ENCODE measurements at regions of chr1 and their contacts with region 1.

Region 1: DNA sequence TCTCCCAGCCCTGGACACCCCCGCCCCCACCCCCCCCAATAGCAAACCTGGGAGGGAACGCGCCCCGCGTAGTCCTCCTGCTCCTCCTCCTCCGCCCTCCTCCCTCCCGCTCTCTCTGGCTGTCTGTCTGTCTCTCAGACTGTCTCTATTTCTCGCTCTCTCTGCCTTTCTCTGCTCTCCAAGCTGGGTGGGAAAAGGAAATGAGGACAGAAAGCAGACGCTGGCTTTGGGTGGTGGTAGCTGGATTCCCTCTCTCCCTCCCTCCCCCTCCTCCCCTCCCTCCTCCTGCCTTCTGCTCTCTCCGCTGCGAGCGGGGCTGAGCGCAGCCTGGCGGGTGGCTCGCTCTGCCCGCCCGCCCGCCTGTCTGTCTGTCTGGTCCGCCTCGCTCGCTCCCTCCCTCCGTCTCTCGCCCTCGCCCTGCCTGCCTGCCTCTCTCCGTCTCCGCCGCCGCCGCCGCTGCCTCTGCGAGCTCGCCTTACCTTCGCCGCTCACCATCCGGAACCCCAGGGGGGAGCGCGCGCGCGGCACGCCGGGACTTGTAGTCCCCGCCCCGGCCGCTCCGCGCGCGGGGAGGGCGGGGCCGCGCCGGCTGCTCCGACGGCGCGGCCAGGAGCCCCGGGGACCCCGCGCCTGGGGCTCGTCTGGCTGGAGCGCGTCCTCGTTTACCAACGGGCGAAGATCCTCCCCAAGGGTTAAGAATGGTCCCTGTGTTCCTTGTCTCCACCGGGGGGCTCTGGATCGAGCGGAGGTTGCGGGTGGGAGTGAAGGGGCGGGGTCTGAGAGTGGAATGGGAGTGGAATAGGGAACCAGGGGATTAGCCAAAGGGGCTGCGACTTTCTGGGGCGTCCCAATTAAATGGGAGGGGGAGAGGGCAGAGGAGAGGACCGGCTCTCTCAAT is at the start of gene AHDC1:
- DNase-seq: peak; percentile 93
- CTCF ChIP-seq: no peak

Region 2: DNA sequence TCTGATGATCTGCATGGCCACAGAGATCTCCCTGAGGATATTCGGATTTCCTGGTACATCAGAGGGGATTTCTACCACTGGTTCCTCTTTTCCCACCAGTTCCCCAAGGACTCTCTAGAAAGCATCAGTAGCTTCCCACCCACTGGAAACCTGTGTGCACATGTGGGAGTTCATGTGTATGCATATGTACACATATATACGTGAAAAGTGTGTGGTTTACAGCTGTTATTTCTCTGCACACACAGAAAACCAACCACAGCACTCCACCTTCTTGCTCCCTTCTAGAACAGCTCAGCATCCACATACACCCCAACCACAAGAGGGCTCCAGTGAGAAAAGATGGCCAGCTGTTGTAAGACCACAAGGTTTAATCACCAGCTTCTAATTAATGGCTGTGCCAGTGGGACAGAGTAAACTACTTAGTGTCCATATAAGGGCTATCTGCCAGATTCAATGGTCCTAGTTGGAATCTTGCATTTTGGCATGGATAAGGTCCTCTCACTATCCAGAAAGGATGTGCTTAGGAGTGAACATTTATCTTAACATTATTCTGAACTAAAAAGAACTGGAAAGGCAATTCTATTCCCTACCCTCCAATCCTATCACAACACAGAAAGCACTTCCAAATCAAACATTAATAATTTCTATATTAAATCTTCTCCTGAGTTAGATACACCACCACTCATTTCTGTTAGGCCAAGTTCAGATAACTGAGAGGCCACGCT is 187.4 kb before region 1 on chr1:
- CTCF ChIA-PET with region 1: interaction called, 41 read pairs
- POLR2A ChIA-PET with region 1: no interaction called
- DNase-seq: no peak
- CTCF ChIP-seq: peak; percentile 64

Region 3: GRCh38 chr1:27536767-27537166 is 67.2 kb before region 1 on chr1:
- CTCF ChIA-PET with region 1: no interaction called
- POLR2A ChIA-PET with region 1: no interaction called
- DNase-seq: no peak
- CTCF ChIP-seq: no peak

Region 4: GRCh38 chr1:27568300-27569087 is 35.4 kb before region 1 on chr1:
- CTCF ChIA-PET with region 1: interaction called, 16 read pairs
- POLR2A ChIA-PET with region 1: interaction called, 3 read pairs
- DNase-seq: peak; percentile 98
- CTCF ChIP-seq: peak; percentile 64

Region 5: DNA sequence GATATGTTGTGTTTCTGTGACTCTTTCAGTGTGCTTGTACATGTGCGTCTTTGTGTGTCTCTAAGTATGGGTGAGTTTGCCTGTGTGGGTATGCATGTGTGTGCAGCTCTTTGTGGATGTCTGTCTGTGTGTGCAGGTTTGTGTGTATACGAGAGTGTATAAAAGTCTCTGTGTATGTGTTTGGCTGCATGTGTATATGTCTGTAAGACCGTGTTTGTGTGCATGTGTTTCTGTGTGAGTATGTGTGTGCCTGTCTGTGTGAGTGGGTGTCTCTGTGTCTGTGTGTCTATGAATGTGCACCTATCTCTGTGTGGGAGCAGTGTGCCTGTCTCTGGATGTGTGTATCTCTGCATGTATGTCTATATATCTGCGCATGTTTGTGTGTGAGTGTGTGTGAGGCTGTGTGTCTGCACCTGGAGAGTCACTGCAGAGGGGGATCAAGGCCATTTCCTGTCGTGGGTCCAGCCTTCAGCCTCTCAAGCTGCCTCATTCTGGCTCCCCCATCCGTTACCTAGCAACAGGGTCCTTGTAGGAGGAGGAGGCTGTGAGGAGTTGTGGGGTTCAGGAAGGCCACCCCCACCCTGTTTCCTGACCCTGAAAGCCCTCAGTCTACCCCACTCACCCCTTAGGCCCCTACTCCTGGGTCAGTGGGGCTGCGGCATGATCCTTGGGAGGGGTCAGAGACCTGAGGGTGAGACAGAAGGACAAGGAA is 20.7 kb after region 1 on chr1:
- CTCF ChIA-PET with region 1: interaction called, 25 read pairs
- POLR2A ChIA-PET with region 1: no interaction called
- DNase-seq: peak; percentile 59
- CTCF ChIP-seq: no peak

Region 6: GRCh38 chr1:27643701-27644625 is 40.0 kb after region 1 on chr1:
- CTCF ChIA-PET with region 1: interaction called, 12 read pairs
- POLR2A ChIA-PET with region 1: no interaction called
- DNase-seq: peak; percentile 72
- CTCF ChIP-seq: peak; percentile 80

Region 7: DNA sequence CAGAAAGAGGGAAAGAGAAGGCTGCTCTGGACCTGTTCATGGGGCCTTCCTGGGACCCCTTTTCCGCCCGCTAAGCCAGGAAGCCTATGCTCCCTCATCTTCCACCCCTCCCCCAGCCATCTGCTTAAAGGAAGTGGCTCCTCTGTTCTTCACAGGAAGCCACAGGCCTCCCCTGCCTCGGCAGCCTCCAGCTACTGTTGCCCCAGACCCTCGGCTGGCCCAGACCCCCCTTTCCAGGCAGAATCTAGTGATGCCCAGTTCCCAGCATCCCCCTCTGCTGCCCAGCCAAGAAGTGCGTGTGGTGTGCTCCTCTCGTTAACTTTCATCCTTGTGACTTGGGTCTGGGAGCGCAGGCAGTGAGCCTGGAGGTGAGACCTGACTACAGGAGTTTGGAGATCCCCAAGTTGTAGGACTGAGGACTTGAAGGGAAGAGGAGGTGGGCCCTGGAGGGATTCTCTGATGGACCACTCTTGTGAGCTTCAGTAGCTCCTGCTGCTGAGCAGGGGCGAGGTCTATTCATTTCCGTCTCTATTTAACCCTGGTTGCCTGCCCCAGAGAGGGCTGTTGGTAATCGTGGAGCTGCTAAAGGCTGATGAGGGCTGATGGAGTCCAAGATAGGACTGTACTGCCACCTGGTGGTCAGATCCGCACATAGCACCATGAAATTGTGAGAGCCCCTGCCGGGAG is 58.9 kb after region 1 on chr1:
- CTCF ChIA-PET with region 1: interaction called, 154 read pairs
- POLR2A ChIA-PET with region 1: interaction called, 4 read pairs
- DNase-seq: peak; percentile 76
- CTCF ChIP-seq: peak; percentile 82

Measured in GM10248 (cell line).